ENCODE measurements at regions of chr1 and their contacts with region 1.

Region 1: GRCh38 chr1:169689395-169689794 is 22.0 kb downstream of the SELL start:
- DNase-seq: no peak
- ATAC-seq: no peak
- H3K4me3 ChIP-seq: no peak overlapping the region
- H3K4me3 Mint-ChIP-seq: peak overlapping the region in 9 of 10 donors; percentile 26 to 79 (median 40)
- H3K27ac ChIP-seq: peak overlapping the region; percentile 70
- H3K27ac Mint-ChIP-seq: peak overlapping the region in 2 of 9 donors; percentile 53 to 96
- H3K4me1 ChIP-seq: peaks cover 54 to 73% of the 10 kb centered on the region in 2 donors
- H3K4me1 Mint-ChIP-seq: peaks cover 0 to 55% (median 23%) of the 10 kb centered on the region in 7 donors
- H3K27me3 ChIP-seq: no peaks in the 10 kb centered on the region
- H3K27me3 Mint-ChIP-seq: no peaks in the 10 kb centered on the region

Region 2: GRCh38 chr1:169670836-169671235 is 18.6 kb before region 1 on chr1:
- CTCF ChIA-PET with region 1: interaction called, 11 read pairs
- POLR2A ChIA-PET with region 1: interaction called, 138 read pairs
- intact Hi-C with region 1: loop called (anchors 2 kb)
- DNase-seq: no peak
- ATAC-seq: no peak
- H3K4me3 ChIP-seq: no peak overlapping the region
- H3K4me3 Mint-ChIP-seq: peak overlapping the region in 8 of 10 donors; percentile 8 to 67 (median 38)
- H3K27ac ChIP-seq: no peak overlapping the region
- H3K27ac Mint-ChIP-seq: peak overlapping the region; percentile 56 to 94 (median 81)
- H3K4me1 ChIP-seq: peaks cover 7 to 32% of the 10 kb centered on the region in 2 donors
- H3K4me1 Mint-ChIP-seq: peaks cover 23 to 68% (median 65%) of the 10 kb centered on the region in 7 donors
- H3K27me3 ChIP-seq: no peaks in the 10 kb centered on the region
- H3K27me3 Mint-ChIP-seq: no peaks in the 10 kb centered on the region

Region 3: GRCh38 chr1:169802888-169803287 is 113.5 kb after region 1 on chr1:
- CTCF ChIA-PET with region 1: no interaction called
- POLR2A ChIA-PET with region 1: no interaction called
- intact Hi-C with region 1: no loop called
- DNase-seq: no peak
- ATAC-seq: no peak
- H3K4me3 ChIP-seq: no peak overlapping the region
- H3K4me3 Mint-ChIP-seq: no peak overlapping the region
- H3K27ac ChIP-seq: no peak overlapping the region
- H3K27ac Mint-ChIP-seq: no peak overlapping the region
- H3K4me1 ChIP-seq: no peaks in the 10 kb centered on the region
- H3K4me1 Mint-ChIP-seq: peaks cover 0 to 27% (median 0%) of the 10 kb centered on the region in 7 donors
- H3K27me3 ChIP-seq: no peaks in the 10 kb centered on the region
- H3K27me3 Mint-ChIP-seq: no peaks in the 10 kb centered on the region

Region 4: GRCh38 chr1:169964206-169964605 is 274.8 kb after region 1 on chr1:
- CTCF ChIA-PET with region 1: no interaction called
- POLR2A ChIA-PET with region 1: no interaction called
- intact Hi-C with region 1: no loop called
- DNase-seq: no peak
- ATAC-seq: no peak
- H3K4me3 ChIP-seq: no peak overlapping the region
- H3K4me3 Mint-ChIP-seq: no peak overlapping the region
- H3K27ac ChIP-seq: no peak overlapping the region
- H3K27ac Mint-ChIP-seq: no peak overlapping the region
- H3K4me1 ChIP-seq: no peaks in the 10 kb centered on the region
- H3K4me1 Mint-ChIP-seq: peaks cover 0 to 2% (median 0%) of the 10 kb centered on the region in 7 donors
- H3K27me3 ChIP-seq: no peaks in the 10 kb centered on the region
- H3K27me3 Mint-ChIP-seq: no peaks in the 10 kb centered on the region

Measured in naive thymus-derived CD4-positive, alpha-beta T cell (primary cell).